Endothelial cell of umbilical vein (primary cell): ENCODE measurements at regions of chr17 and their contacts with region 1.

Region 1: GRCh38 chr17:44170499-44171201 is at the start of gene ASB16:
- DNase-seq: no peak
- H3K4me3 ChIP-seq: no peak within 1 kb of the TSS
- H3K27ac ChIP-seq: no peak within 1 kb of the TSS
- H3K4me1 ChIP-seq: no peaks in the 10 kb centered on the region
- H3K27me3 ChIP-seq: no peaks in the 10 kb centered on the region
- CTCF ChIP-seq: no peak
- POLR2A ChIP-seq: no peak
- total RNA-seq, gene ASB16: not detected in 2 replicates

Region 2: DNA sequence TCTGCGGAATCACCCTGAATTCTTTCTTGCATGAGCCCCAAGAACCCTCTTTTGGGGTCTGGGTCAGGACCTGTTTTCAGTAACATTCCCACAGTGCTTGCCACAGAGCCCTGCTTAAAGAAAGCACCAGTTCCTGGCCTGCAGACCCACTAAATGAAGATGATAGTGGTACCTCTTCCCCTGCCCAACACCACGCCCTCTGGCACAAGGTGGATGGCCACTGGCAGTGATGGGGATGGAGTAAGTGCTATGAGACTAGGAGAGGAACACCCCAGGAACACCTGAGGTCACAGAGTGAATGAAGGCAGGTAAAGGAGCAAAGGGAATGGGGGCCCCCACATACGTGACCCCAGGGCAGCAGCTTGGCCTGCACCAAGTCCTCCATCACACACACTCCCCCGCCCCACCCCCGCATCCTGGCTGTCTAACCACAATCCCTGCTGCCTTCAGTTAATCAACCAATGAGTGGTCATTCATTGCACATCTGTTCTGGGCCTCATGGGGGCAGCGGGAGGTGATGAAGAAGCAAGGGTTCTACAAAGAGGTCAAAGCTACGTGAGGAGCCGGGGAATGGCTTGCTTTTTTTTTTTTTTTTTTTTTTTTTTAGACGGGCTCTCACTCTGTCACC is 224.5 kb before region 1 on chr17:
- CTCF ChIA-PET with region 1: interaction called, 69 read pairs
- POLR2A ChIA-PET with region 1: no interaction called
- dilution Hi-C with region 1: no loop called
- intact Hi-C with region 1: loop called (anchors 1 kb)
- DNase-seq: no peak
- H3K4me3 ChIP-seq: no peak overlapping the region
- H3K27ac ChIP-seq: no peak overlapping the region
- H3K4me1 ChIP-seq: no peaks in the 10 kb centered on the region
- H3K27me3 ChIP-seq: peaks cover 7 to 9% of the 10 kb centered on the region in 2 experiments
- CTCF ChIP-seq: no peak
- POLR2A ChIP-seq: no peak

Region 3: DNA sequence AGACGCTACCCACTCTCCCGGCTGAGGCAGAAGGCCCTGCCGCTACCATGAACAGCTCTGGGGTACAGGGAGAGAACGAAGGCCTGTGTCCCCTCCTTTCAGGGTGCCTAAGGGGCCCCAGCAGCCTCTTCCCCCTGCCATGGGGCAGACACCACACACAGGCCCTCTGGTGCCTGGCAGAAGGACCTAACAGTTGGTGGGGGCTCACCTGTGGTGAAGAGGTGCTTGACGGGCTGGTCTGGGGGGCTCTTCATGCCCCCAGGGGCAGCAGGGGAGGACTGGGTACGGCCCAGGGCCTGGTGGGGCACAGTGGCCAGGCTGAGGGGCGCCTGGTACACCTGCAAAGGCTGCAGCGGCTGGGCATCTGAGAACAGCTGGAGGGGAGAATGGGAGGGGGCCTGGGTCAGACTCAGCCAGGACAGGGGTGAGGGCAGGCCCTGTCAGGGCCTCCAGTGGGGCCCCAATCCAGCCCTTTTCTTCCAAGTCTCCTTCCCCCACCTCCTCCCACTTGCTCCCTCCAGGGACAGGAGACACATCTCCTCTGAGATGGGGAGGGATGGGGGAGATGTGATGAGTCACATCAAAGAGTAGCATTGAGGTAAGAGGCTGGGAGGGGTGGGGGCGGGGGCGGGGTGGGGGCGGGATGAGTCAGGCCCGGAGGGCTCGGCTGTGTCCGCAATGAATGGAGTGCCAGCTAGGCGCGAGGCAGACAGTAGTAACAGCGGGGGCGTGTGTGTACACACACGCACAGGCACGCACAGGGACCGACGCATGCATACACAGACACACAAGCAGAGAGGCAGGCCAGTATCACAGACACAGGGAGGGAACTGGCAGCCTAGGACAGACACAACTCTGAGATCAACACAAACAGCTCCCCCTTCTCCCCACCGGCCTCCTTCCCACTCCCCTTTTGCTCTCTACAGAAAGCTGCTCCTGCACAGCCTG is 84.0 kb before region 1 on chr17:
- CTCF ChIA-PET with region 1: interaction called, 12 read pairs
- POLR2A ChIA-PET with region 1: no interaction called
- dilution Hi-C with region 1: no loop called
- intact Hi-C with region 1: no loop called
- DNase-seq: peak; percentile 50
- H3K4me3 ChIP-seq: no peak overlapping the region
- H3K27ac ChIP-seq: no peak overlapping the region
- H3K4me1 ChIP-seq: peaks cover 6% of the 10 kb centered on the region
- H3K27me3 ChIP-seq: no peaks in the 10 kb centered on the region
- CTCF ChIP-seq: no peak
- POLR2A ChIP-seq: no peak

Region 4: DNA sequence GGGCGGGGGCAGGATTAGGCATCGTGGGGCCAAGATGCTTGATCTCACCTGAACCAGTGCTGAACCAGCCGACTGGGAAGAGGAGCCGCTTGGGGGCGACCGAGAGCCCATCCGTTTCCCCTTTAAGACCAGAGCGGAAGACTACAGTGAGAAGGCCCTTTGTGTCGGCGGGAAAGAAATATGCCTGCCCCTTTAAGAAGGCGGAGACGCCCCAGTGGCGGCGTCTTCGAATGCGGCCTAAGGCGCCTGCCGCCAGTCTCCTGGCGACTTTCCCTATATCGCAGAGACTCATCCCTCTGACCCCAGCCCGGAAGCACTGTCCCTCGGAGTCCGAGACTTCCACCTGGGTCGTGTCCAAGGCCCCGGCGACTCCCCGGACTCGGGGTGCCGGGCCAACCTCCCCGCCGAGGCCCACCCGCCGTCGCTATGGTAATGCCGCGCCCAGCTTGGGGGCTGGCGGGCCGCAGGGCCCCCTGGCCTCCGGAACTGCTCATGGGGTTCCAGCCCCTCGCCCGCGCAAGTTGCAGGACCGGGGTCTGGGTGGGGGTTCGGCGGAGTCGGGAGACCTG is 28.8 kb before region 1 on chr17 and contains the start of gene HROB:
- CTCF ChIA-PET with region 1: interaction called, 10 read pairs
- POLR2A ChIA-PET with region 1: no interaction called
- dilution Hi-C with region 1: no loop called
- intact Hi-C with region 1: no loop called
- DNase-seq: peak; percentile 94
- H3K4me3 ChIP-seq: peak within 1 kb of the TSS; percentile 81 to 98 (median 88)
- H3K27ac ChIP-seq: peak within 1 kb of the TSS; percentile 93
- H3K4me1 ChIP-seq: peaks cover 20% of the 10 kb centered on the region
- H3K27me3 ChIP-seq: no peaks in the 10 kb centered on the region
- CTCF ChIP-seq: peak; percentile 87 to 97
- POLR2A ChIP-seq: no peak
- total RNA-seq, gene HROB: 9.0 and 10.1 TPM in 2 replicates

Region 5: DNA sequence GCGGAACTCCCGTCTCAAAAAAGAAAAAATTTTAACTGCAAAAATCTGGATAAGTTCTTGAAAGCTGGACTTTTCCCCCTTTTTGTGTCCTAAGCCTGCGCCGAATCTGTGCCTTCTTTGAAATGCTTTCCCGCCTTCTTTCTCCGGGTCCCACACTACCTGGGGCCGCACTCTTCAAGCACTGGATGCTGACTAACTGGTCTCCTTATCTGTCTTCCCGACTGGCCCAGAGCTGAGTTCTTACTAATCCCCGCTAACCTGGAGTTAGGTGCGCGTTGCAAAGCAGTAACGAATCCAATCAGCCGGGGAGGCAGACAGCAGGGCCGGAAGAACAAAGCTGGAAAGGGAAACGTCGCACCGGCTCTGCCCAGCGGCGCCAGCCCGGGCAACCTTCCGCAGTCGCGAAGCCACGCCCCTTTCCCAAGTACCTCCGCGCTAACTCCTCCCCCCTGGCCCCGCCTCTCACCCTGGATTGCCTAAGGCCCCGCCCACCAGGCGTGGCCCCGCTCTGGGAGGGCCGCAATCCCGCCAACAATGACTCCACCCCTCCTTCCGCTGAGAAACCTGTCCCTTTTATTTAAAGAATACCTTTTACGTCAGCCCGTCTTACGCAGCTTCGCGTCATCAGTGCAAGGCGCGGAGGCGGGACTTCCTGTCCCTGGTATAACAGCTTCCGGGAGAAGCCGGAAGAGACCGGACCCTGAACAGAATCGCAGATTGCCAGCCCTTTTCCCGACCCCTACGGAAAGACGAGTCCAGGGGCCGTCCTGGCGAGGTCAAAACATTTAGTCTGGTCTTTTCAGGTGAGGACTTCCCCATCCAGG is 15.9 kb after region 1 on chr17 and contains the start of gene TMUB2:
- CTCF ChIA-PET with region 1: interaction called, 17 read pairs
- POLR2A ChIA-PET with region 1: no interaction called
- dilution Hi-C with region 1: no loop called
- intact Hi-C with region 1: no loop called
- DNase-seq: peak; percentile 100
- H3K4me3 ChIP-seq: peak within 1 kb of the TSS; percentile 82 to 96 (median 94)
- H3K27ac ChIP-seq: peak within 1 kb of the TSS; percentile 92
- H3K4me1 ChIP-seq: peaks cover 13% of the 10 kb centered on the region
- H3K27me3 ChIP-seq: no peaks in the 10 kb centered on the region
- CTCF ChIP-seq: no peak
- POLR2A ChIP-seq: peak; percentile 92
- total RNA-seq, gene TMUB2: 39.5 and 43.6 TPM in 2 replicates

Region 6: DNA sequence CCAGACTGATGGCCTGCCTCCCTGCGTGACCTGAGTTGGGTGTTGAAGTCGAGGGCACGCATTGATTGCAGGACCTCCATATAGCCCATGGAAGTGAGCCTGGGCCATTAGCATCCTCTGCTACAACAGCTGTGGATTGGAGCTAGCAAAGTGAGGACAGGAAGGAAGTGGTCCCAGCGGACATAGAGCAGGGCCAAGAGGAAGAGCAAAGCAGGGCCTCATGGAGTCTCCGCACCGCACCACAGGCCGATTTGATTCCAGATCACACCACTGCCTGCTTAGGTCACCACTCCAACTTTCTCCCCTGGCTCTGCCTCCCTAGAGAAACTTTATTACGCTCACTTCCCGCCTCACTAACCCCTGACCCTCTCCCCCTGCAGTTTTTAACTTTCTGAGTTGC is 59.5 kb after region 1 on chr17:
- CTCF ChIA-PET with region 1: no interaction called
- POLR2A ChIA-PET with region 1: no interaction called
- dilution Hi-C with region 1: no loop called
- intact Hi-C with region 1: no loop called
- DNase-seq: no peak
- H3K4me3 ChIP-seq: no peak overlapping the region
- H3K27ac ChIP-seq: no peak overlapping the region
- H3K4me1 ChIP-seq: peaks cover 7% of the 10 kb centered on the region
- H3K27me3 ChIP-seq: no peaks in the 10 kb centered on the region
- CTCF ChIP-seq: no peak
- POLR2A ChIP-seq: no peak